Esophagus squamous epithelium (tissue), 5 donors: ENCODE measurements at regions of chr1 and their contacts with region 1.

Region 1: GRCh38 chr1:93179886-93180722 is at the start of gene TMED5:
- DNase-seq: peak; percentile 88
- H3K4me3 ChIP-seq: peak within 1 kb of the TSS; percentile 53 to 98 (median 92)
- H3K27ac ChIP-seq: peak within 1 kb of the TSS; percentile 92 to 100 (median 100)
- H3K4me1 ChIP-seq: peaks cover 0 to 41% (median 14%) of the 10 kb centered on the region in 3 donors
- H3K27me3 ChIP-seq: no peaks in the 10 kb centered on the region
- CTCF ChIP-seq: peak in 5 of 6 experiments; percentile 5 to 50 (median 37)
- POLR2A ChIP-seq: peak in 2 of 4 donors; percentile 92 to 97
- total RNA-seq, gene TMED5: 28.7 to 47.9 (median 39.1) TPM

Region 2: GRCh38 chr1:93078986-93079654 is 101.0 kb before region 1 on chr1 and contains the start of gene MTF2:
- intact Hi-C with region 1: loop called (anchors 10 kb)
- DNase-seq: peak; percentile 66
- H3K4me3 ChIP-seq: peak within 1 kb of the TSS; percentile 57 to 89 (median 84)
- H3K27ac ChIP-seq: peak within 1 kb of the TSS; percentile 84 to 93 (median 88)
- H3K4me1 ChIP-seq: peaks cover 4 to 44% (median 11%) of the 10 kb centered on the region in 3 donors
- H3K27me3 ChIP-seq: no peaks in the 10 kb centered on the region
- CTCF ChIP-seq: peak in 1 of 6 experiments; percentile 45
- POLR2A ChIP-seq: peak in 3 of 4 donors; percentile 70 to 84 (median 76)
- total RNA-seq, gene MTF2: 7.0 to 18.4 (median 14.8) TPM

Region 3: DNA sequence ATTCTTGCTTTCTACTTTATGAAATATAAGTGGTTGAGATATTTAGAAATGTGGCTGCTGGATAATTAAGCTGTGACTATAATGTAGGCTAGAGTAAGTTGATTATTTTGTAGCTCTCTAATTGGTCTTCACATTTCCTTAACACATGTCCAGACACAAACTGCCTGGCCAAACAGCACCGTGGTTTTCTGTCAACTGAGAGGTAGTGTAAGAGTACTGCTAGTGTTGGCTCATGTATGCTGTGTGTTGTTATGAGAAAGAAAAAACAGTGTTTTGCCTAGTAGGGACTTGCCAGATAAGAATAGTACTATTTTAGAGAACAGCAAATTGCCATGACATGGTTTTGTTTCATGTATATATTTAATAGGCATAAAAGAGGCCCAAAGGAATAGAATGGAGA is 37.0 kb before region 1 on chr1:
- intact Hi-C with region 1: no loop called
- DNase-seq: no peak
- H3K4me3 ChIP-seq: no peak overlapping the region
- H3K27ac ChIP-seq: no peak overlapping the region
- H3K4me1 ChIP-seq: peaks cover 0 to 9% (median 0%) of the 10 kb centered on the region in 3 donors
- H3K27me3 ChIP-seq: no peaks in the 10 kb centered on the region
- CTCF ChIP-seq: no peak
- POLR2A ChIP-seq: no peak